IMR-90 (cell line): ENCODE measurements at regions of chr6 and their contacts with region 1.

Region 1: DNA sequence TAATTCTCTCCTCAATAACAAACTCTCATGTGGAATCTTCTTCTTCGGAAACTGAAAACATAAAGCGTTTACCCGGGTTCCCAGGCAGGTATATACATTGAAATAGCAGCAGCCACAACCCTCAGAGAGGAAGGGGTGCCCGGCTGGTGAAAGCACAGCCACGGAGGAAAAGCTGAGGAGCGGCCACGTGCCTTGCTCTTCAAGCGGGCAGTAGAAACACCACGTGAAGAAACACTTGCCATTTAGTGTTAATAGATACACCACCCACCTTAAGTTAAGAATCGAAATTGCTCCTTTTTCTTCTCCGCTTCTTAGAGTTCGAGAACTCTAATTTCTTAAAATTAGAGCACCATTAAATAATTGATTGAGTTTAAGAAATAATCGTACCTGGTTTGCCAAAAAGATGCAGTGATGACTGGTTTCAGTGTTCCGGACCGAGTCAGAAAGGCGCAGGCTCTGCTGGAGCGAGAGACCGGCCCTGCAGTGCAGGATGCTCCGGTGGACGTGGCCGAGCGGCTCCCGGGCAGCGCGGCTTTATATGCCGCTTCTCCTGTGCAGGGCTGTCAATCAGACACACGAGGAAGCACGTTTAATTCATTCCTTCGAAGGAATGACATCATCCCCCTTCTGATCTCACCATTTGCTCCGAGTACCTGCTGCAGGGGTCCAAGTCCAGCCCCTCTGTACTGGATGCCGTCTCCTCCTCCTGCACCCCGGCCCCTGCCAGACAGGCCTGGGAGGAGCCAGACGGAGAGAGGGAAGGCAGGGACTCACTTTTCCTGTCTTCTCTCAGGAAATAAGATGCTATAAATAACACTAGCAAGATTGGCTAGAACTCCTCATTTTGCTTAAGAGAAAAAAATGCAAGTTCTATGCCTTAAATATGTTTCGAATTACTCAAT is at the start of gene THBS2:
- DNase-seq: peak; percentile 93
- ATAC-seq: peak; percentile 77
- H3K4me3 ChIP-seq: peak within 1 kb of the TSS; percentile 68
- H3K27ac ChIP-seq: peak within 1 kb of the TSS; percentile 51
- H3K4me1 ChIP-seq: peaks cover 15% of the 10 kb centered on the region
- H3K27me3 ChIP-seq: no peaks in the 10 kb centered on the region
- CTCF ChIP-seq: no peak
- POLR2A ChIP-seq: peak; percentile 95
- RAD21 ChIP-seq: no peak; the same call in 1 of the 2 replicates
- total RNA-seq, gene THBS2: 101 and 113 TPM in 2 replicates

Region 2: GRCh38 chr6:169326067-169326799 is 72.6 kb after region 1 on chr6:
- CTCF ChIA-PET with region 1: no interaction called
- POLR2A ChIA-PET with region 1: no interaction called
- dilution Hi-C with region 1: no loop called
- in situ Hi-C with region 1: no loop called
- intact Hi-C with region 1: loop called (anchors 2 kb)
- DNase-seq: peak; percentile 52
- ATAC-seq: peak; percentile 43
- H3K4me3 ChIP-seq: no peak overlapping the region
- H3K27ac ChIP-seq: no peak overlapping the region
- H3K4me1 ChIP-seq: peaks cover 2% of the 10 kb centered on the region; the same call in 1 of the 2 replicates
- H3K27me3 ChIP-seq: no peaks in the 10 kb centered on the region
- CTCF ChIP-seq: peak; percentile 51
- POLR2A ChIP-seq: no peak
- RAD21 ChIP-seq: peak; percentile 66

Region 3: GRCh38 chr6:169452117-169452868 is 198.7 kb after region 1 on chr6:
- CTCF ChIA-PET with region 1: no interaction called
- POLR2A ChIA-PET with region 1: no interaction called
- dilution Hi-C with region 1: no loop called
- in situ Hi-C with region 1: no loop called
- intact Hi-C with region 1: loop called (anchors 2 kb)
- DNase-seq: peak; percentile 97
- ATAC-seq: peak; percentile 94
- H3K4me3 ChIP-seq: peak overlapping the region; percentile 12; the same call in 1 of the 2 replicates
- H3K27ac ChIP-seq: peak overlapping the region; percentile 93
- H3K4me1 ChIP-seq: peaks cover 21% of the 10 kb centered on the region
- H3K27me3 ChIP-seq: no peaks in the 10 kb centered on the region
- CTCF ChIP-seq: no peak
- POLR2A ChIP-seq: no peak
- RAD21 ChIP-seq: no peak; the same call in 1 of the 2 replicates

Region 4: DNA sequence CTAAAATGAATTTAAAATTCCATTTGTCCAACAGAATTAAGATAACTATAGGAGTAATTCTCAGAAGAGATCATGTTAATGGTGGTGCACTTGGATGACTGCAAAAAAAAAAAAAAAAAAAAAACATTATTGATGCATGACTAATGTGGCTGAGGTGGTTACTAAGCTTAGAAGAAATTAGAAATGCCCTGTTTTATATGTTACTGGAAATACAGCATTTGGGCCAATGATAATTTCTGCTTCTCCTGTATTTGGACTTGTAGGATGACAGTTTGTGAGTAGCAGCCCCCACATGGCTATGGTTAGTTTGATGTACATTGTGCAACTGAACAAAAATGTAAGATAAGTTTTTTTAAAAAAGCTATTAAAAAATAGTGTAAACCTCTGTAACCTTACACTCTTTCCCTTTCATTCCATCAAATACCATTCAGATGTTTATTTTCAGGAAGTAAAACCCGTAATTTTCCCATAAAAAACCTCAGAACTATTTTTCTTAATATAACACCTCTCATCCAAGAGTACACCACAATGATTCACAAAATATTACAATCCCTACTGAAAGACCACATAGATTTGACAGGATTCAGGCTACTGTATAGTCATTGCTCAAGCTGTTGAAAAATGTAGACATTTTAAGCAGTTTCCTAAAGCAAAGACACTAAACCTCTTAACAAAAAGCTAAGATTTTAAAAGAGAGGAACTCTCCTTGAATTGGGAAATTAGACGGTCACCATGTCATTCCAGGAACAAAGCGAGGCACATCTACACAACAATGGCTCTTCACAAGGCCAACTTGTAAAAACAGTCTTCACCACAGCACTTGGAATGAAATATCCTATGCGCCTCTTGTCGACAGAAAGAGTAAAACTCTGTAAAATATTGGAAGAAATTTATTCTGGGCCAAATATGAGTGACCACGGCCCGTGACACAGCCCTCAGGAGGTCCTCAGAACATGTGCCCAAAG is 365.2 kb after region 1 on chr6:
- CTCF ChIA-PET with region 1: no interaction called
- POLR2A ChIA-PET with region 1: no interaction called
- dilution Hi-C with region 1: no loop called
- in situ Hi-C with region 1: no loop called
- intact Hi-C with region 1: loop called (anchors 1 kb)
- DNase-seq: peak; percentile 97
- ATAC-seq: peak; percentile 79
- H3K4me3 ChIP-seq: no peak overlapping the region
- H3K27ac ChIP-seq: peak overlapping the region; percentile 90
- H3K4me1 ChIP-seq: peaks cover 18% of the 10 kb centered on the region
- H3K27me3 ChIP-seq: no peaks in the 10 kb centered on the region
- CTCF ChIP-seq: no peak
- POLR2A ChIP-seq: no peak
- RAD21 ChIP-seq: no peak

Region 5: GRCh38 chr6:169723200-169723909 is 469.8 kb after region 1 on chr6:
- CTCF ChIA-PET with region 1: no interaction called
- POLR2A ChIA-PET with region 1: no interaction called
- dilution Hi-C with region 1: no loop called
- in situ Hi-C with region 1: no loop called
- intact Hi-C with region 1: no loop called
- DNase-seq: peak; percentile 66
- ATAC-seq: peak; percentile 35
- H3K4me3 ChIP-seq: peak overlapping the region; percentile 93
- H3K27ac ChIP-seq: peak overlapping the region; percentile 44
- H3K4me1 ChIP-seq: peaks cover 4% of the 10 kb centered on the region; the same call in 1 of the 2 replicates
- H3K27me3 ChIP-seq: no peaks in the 10 kb centered on the region
- CTCF ChIP-seq: no peak
- POLR2A ChIP-seq: peak; percentile 79; the same call in 1 of the 2 replicates
- RAD21 ChIP-seq: no peak